Caco-2 (cell line): ENCODE measurements at regions of chr12 and their contacts with region 1.

Region 1: GRCh38 chr12:88993651-88994050 is 358.6 kb downstream of the DUSP6 start:
- DNase-seq: peak in 1 of 2 experiments; percentile 40
- H3K4me3 ChIP-seq: no peak overlapping the region
- H3K4me3 Mint-ChIP-seq: no peak overlapping the region
- H3K27ac Mint-ChIP-seq: peak overlapping the region; percentile 75
- H3K4me1 ChIP-seq: peaks cover 32% of the 10 kb centered on the region
- H3K4me1 Mint-ChIP-seq: peaks cover 27% of the 10 kb centered on the region
- H3K27me3 ChIP-seq: no peaks in the 10 kb centered on the region
- H3K27me3 Mint-ChIP-seq: no peaks in the 10 kb centered on the region
- CTCF ChIP-seq: peak; percentile 61 to 63

Region 2: DNA sequence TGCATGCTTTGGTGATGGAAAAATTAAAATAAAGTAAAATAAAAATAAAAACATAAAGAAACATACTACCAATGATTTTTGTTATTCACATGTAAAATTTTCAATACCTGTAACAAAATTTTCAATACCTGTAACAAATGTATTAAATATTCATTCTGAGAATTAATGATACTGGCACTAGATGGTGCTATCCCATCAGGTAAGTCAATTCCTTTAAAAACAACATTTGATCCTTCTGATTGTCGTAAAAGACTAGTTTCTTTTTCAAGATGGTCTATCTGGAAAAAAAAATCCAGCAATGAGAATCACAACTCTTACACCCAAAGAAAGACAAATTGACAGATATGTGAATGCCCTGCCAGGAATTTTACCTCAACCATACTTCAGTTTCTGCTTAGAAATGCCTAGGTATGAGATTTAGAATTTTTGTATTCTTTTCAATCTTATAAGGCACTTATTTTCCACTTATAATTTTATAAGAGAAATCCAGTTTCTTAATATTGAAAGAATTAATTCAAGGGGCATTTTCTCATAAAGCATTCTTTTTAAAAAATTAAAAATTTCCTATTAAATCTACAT is 882.5 kb before region 1 on chr12:
- CTCF ChIA-PET with region 1: no interaction called
- POLR2A ChIA-PET with region 1: no interaction called
- intact Hi-C with region 1: loop called (anchors 10 kb)
- DNase-seq: peak in 1 of 2 experiments; percentile 26
- H3K4me3 ChIP-seq: no peak overlapping the region
- H3K4me3 Mint-ChIP-seq: no peak overlapping the region
- H3K27ac Mint-ChIP-seq: no peak overlapping the region
- H3K4me1 ChIP-seq: peaks cover 4% of the 10 kb centered on the region; the same call in 1 of the 2 replicates
- H3K4me1 Mint-ChIP-seq: peaks cover 13% of the 10 kb centered on the region
- H3K27me3 ChIP-seq: no peaks in the 10 kb centered on the region
- H3K27me3 Mint-ChIP-seq: no peaks in the 10 kb centered on the region
- CTCF ChIP-seq: peak; percentile 34 to 56

Region 3: GRCh38 chr12:88501972-88502938 is 491.4 kb before region 1 on chr12:
- CTCF ChIA-PET with region 1: no interaction called
- POLR2A ChIA-PET with region 1: no interaction called
- intact Hi-C with region 1: loop called (anchors 10 kb)
- DNase-seq: no peak
- H3K4me3 ChIP-seq: no peak overlapping the region
- H3K4me3 Mint-ChIP-seq: no peak overlapping the region
- H3K27ac Mint-ChIP-seq: no peak overlapping the region
- H3K4me1 ChIP-seq: peaks cover 19% of the 10 kb centered on the region
- H3K4me1 Mint-ChIP-seq: peaks cover 22% of the 10 kb centered on the region
- H3K27me3 ChIP-seq: no peaks in the 10 kb centered on the region
- H3K27me3 Mint-ChIP-seq: no peaks in the 10 kb centered on the region
- CTCF ChIP-seq: no peak

Region 4: GRCh38 chr12:88633312-88633711 is 360.3 kb before region 1 on chr12:
- CTCF ChIA-PET with region 1: no interaction called
- POLR2A ChIA-PET with region 1: no interaction called
- intact Hi-C with region 1: loop called (anchors 1 kb)
- DNase-seq: no peak
- H3K4me3 ChIP-seq: no peak overlapping the region
- H3K4me3 Mint-ChIP-seq: no peak overlapping the region
- H3K27ac Mint-ChIP-seq: no peak overlapping the region
- H3K4me1 ChIP-seq: peaks cover 6% of the 10 kb centered on the region; the same call in 1 of the 2 replicates
- H3K4me1 Mint-ChIP-seq: peaks cover 8% of the 10 kb centered on the region
- H3K27me3 ChIP-seq: no peaks in the 10 kb centered on the region
- H3K27me3 Mint-ChIP-seq: no peaks in the 10 kb centered on the region
- CTCF ChIP-seq: peak; percentile 8 to 42

Region 5: GRCh38 chr12:88854260-88854659 is 139.4 kb before region 1 on chr12:
- CTCF ChIA-PET with region 1: no interaction called
- POLR2A ChIA-PET with region 1: no interaction called
- intact Hi-C with region 1: loop called (anchors 2 kb)
- DNase-seq: peak in 1 of 2 experiments; percentile 63
- H3K4me3 ChIP-seq: no peak overlapping the region
- H3K4me3 Mint-ChIP-seq: peak overlapping the region; percentile 20
- H3K27ac Mint-ChIP-seq: peak overlapping the region; percentile 84
- H3K4me1 ChIP-seq: peaks cover 26% of the 10 kb centered on the region
- H3K4me1 Mint-ChIP-seq: peaks cover 20% of the 10 kb centered on the region
- H3K27me3 ChIP-seq: no peaks in the 10 kb centered on the region
- H3K27me3 Mint-ChIP-seq: no peaks in the 10 kb centered on the region
- CTCF ChIP-seq: no peak